Right ventricle myocardium inferior (tissue), 1 donor: ENCODE measurements at regions of chr1 and their contacts with region 1.

Region 1: DNA sequence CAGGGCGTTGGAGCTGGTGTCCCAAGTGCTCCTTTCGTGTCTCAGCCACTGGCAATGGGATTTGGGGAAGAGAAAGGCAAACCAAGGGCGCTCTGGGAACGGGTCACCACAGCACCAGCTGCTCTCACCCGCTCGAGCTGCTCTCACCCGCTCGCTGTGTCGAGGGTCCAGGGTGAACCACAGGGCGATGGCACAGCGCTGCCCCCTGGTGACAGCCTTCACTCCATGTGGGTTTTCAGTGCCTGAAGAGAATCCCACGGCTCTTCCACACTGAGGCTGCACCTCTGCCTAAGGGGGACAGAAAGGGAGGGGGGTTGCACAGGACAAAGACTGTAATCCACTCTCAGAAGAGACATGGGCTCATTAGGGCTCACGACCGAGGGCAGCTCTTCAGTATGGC is 7.1 kb upstream of the CLDN19 start:
- DNase-seq: no peak
- ATAC-seq: peak; percentile 49

Region 2: GRCh38 chr1:42146626-42147320 is 600.4 kb before region 1 on chr1:
- intact Hi-C with region 1: loop called (anchors 10 kb)
- DNase-seq: no peak
- ATAC-seq: peak; percentile 56

Region 3: DNA sequence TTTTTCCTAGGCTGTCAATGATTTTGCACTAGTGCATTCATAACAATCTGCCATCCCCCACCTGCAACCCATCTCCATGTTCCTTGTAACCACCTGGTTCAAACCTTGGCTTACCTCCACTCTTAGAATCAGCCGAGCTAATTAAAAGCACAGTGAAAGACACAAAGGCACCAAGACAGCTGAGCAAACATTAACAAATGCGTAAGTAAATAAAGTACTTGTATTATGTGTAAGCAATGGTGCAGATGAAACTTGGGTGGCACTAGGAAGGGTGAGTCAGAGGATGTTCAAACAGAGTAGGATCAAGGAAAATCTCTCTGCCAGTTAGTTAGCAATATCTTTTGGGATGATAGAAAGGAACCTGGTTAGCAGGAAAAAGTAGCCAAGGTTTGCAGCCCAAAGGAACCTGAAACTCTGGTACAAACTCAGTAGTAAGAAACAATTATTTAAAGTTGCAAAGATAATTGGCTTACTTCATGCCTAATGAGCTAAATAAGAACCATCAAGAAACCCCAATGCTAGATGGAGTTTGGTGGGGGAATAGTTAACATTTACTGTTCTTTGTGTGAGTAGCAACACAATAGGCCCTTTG is 406.9 kb before region 1 on chr1:
- intact Hi-C with region 1: no loop called
- DNase-seq: no peak
- ATAC-seq: no peak

Region 4: DNA sequence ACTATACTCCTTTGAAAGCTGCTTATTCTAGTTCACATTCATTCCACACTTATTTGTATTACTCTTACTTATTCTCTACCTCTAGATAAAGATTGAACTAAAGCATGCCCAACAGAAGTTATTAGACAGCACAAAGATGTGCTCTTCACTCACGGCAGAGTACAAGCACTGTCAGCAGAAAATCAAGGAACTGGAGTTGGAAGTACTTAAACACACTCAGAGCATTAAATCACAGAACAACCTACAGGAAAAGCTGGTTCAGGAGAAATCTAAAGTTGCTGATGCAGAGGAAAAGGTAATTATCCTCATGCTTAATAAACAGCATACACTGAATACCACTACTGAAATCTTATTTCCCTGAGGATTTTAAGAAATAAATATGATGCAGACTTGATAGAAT is 170.2 kb before region 1 on chr1:
- intact Hi-C with region 1: loop called (anchors 2 kb)
- DNase-seq: no peak
- ATAC-seq: no peak

Region 5: GRCh38 chr1:42692461-42692860 is 54.7 kb before region 1 on chr1:
- intact Hi-C with region 1: no loop called
- DNase-seq: no peak
- ATAC-seq: no peak